Heart left ventricle (tissue), 16 donors: ENCODE measurements at regions of chr3 and their contacts with region 1.

Region 1: GRCh38 chr3:155323063-155323666 is 29.7 kb upstream of the STRIT1 start:
- DNase-seq: peak in 1 of 5 donors; percentile 12
- ATAC-seq: peak; percentile 69 to 84 (median 78)
- H3K4me3 ChIP-seq: no peak overlapping the region
- H3K27ac ChIP-seq: no peak overlapping the region
- H3K4me1 ChIP-seq: no peaks in the 10 kb centered on the region
- H3K27me3 ChIP-seq: no peaks in the 10 kb centered on the region
- CTCF ChIP-seq: peak; percentile 50 to 77 (median 68)
- POLR2A ChIP-seq: no peak

Region 2: DNA sequence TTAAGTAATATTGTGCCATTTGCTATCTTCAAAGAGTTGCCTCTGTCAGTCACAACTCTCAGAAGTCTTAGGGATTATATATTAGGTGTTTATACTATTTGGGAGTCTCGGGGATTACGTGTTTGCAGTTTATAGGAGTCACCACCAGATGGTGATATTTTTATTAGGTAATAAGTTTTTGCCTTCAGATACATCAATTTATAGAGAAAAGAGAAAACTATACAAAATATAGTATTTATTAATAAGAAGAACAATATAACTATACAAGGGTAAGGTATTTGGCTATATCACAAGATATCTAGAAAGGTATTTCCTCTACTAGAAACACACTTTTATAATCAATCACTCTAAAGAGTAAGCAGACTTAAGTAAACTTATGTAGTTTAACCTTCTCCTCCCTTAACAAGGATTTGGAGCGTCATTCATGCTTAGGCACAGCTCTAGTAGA is 988.2 kb before region 1 on chr3:
- intact Hi-C with region 1: loop called in 9 of 10 experiments (anchors 2 to 5 kb)
- DNase-seq: no peak
- ATAC-seq: no peak
- H3K4me3 ChIP-seq: no peak overlapping the region
- H3K27ac ChIP-seq: no peak overlapping the region
- H3K4me1 ChIP-seq: no peaks in the 10 kb centered on the region
- H3K27me3 ChIP-seq: peaks cover 0 to 2% (median 0%) of the 10 kb centered on the region in 9 donors
- CTCF ChIP-seq: peak; percentile 35 to 82 (median 61)
- POLR2A ChIP-seq: no peak

Region 3: GRCh38 chr3:154758109-154758868 is 564.9 kb before region 1 on chr3:
- intact Hi-C with region 1: loop called (anchors 1 to 5 kb)
- DNase-seq: no peak
- ATAC-seq: no peak
- H3K4me3 ChIP-seq: no peak overlapping the region
- H3K27ac ChIP-seq: peak overlapping the region in 1 of 12 donors; percentile 12
- H3K4me1 ChIP-seq: peaks cover 0 to 3% (median 0%) of the 10 kb centered on the region in 12 donors
- H3K27me3 ChIP-seq: no peaks in the 10 kb centered on the region
- CTCF ChIP-seq: peak; percentile 9 to 68 (median 48)
- POLR2A ChIP-seq: no peak

Region 4: DNA sequence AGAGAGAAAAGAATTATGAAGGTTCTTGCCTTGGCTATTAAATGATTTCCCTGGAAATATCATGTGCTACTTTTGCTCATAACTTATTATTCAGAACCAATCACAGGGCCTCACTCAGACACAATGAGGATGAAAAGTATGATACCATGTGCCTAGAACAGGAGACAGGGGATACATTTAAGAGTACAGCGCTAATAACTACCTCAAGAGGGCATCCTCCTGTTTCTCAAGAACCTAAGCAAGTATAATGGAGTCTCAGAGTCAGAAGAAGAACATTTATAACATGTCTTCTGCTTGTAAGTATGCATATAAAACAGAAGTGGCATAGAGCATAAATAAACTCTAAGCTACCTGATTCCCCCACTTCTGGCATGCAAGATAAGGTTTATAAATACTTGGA is 368.4 kb before region 1 on chr3:
- intact Hi-C with region 1: loop called in 2 of 10 experiments (anchors 10 kb)
- DNase-seq: no peak
- ATAC-seq: peak in 1 of 4 donors; percentile 42
- H3K4me3 ChIP-seq: no peak overlapping the region
- H3K27ac ChIP-seq: no peak overlapping the region
- H3K4me1 ChIP-seq: no peaks in the 10 kb centered on the region
- H3K27me3 ChIP-seq: no peaks in the 10 kb centered on the region
- CTCF ChIP-seq: peak in 4 of 12 donors; percentile 13 to 27 (median 19)
- POLR2A ChIP-seq: no peak

Region 5: GRCh38 chr3:155101398-155101797 is 221.8 kb before region 1 on chr3:
- intact Hi-C with region 1: no loop called
- DNase-seq: peak in 4 of 5 donors; percentile 25 to 55 (median 38)
- ATAC-seq: peak in 3 of 4 donors; percentile 75 to 80 (median 80)
- H3K4me3 ChIP-seq: no peak overlapping the region
- H3K27ac ChIP-seq: peak overlapping the region in 1 of 12 donors; percentile 1
- H3K4me1 ChIP-seq: peaks cover 0 to 5% (median 0%) of the 10 kb centered on the region in 12 donors
- H3K27me3 ChIP-seq: no peaks in the 10 kb centered on the region
- CTCF ChIP-seq: no peak
- POLR2A ChIP-seq: no peak